ENCODE measurements at regions of chr1 and their contacts with region 1.

Region 1: DNA sequence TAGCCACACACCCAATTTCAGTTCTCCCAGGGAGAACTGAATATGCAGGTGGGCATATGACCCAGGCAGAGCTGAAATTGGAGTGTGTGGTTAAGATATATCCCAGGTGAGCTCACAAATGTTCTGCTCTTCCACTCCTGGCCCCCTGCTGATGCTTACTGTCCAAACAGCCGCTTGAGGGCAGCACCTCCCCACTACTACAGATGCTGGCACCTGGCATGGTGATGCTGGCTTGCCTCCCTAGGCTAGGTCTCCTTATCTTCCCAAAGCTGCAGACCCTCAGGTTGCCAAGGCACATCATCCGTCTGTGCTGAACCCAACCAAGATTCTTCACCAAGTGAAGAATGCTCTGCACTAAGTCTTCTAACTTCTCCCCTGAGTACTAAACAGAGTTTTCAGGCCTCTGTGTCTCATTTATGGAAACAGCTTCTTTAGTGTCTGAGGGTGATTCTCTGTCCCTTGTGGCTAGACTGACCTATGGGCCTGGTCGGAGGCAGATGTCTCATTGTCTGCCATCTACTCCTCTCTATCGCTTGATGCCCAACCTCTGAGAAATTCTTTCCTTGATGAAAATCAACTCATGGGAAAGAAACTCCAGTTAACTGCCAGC is 27.2 kb downstream of the XCL1 start:
- DNase-seq: peak; percentile 68 to 79
- ATAC-seq: peak; percentile 53 to 69
- H3K4me3 ChIP-seq: no peak overlapping the region
- H3K27ac ChIP-seq: peak overlapping the region; percentile 17 to 100 (median 56)
- H3K4me1 ChIP-seq: peaks cover 28 to 32% of the 10 kb centered on the region in 2 donors
- H3K27me3 ChIP-seq: no peaks in the 10 kb centered on the region
- CTCF ChIP-seq: peak; percentile 86 to 93 (median 87)
- POLR2A ChIP-seq: no peak

Region 2: GRCh38 chr1:168466092-168466713 is 137.4 kb before region 1 on chr1:
- in situ Hi-C with region 1: no loop called
- intact Hi-C with region 1: no loop called
- DNase-seq: peak in 1 of 2 donors; percentile 33
- ATAC-seq: no peak
- H3K4me3 ChIP-seq: no peak overlapping the region
- H3K27ac ChIP-seq: peak overlapping the region in 1 of 4 donors; percentile 12
- H3K4me1 ChIP-seq: peaks cover 23 to 35% of the 10 kb centered on the region in 2 donors
- H3K27me3 ChIP-seq: no peaks in the 10 kb centered on the region
- CTCF ChIP-seq: no peak
- POLR2A ChIP-seq: no peak

Region 3: GRCh38 chr1:168488138-168488537 is 115.5 kb before region 1 on chr1:
- in situ Hi-C with region 1: no loop called
- intact Hi-C with region 1: no loop called
- DNase-seq: peak; percentile 32 to 67
- ATAC-seq: peak; percentile 89 to 90
- H3K4me3 ChIP-seq: no peak overlapping the region
- H3K27ac ChIP-seq: no peak overlapping the region
- H3K4me1 ChIP-seq: peaks cover 0 to 6% of the 10 kb centered on the region in 2 donors
- H3K27me3 ChIP-seq: no peaks in the 10 kb centered on the region
- CTCF ChIP-seq: no peak
- POLR2A ChIP-seq: no peak

Region 4: GRCh38 chr1:168567007-168567406 is 36.6 kb before region 1 on chr1:
- in situ Hi-C with region 1: no loop called
- intact Hi-C with region 1: no loop called
- DNase-seq: no peak
- ATAC-seq: no peak
- H3K4me3 ChIP-seq: no peak overlapping the region
- H3K27ac ChIP-seq: no peak overlapping the region
- H3K4me1 ChIP-seq: no peaks in the 10 kb centered on the region
- H3K27me3 ChIP-seq: no peaks in the 10 kb centered on the region
- CTCF ChIP-seq: no peak
- POLR2A ChIP-seq: no peak

Region 5: DNA sequence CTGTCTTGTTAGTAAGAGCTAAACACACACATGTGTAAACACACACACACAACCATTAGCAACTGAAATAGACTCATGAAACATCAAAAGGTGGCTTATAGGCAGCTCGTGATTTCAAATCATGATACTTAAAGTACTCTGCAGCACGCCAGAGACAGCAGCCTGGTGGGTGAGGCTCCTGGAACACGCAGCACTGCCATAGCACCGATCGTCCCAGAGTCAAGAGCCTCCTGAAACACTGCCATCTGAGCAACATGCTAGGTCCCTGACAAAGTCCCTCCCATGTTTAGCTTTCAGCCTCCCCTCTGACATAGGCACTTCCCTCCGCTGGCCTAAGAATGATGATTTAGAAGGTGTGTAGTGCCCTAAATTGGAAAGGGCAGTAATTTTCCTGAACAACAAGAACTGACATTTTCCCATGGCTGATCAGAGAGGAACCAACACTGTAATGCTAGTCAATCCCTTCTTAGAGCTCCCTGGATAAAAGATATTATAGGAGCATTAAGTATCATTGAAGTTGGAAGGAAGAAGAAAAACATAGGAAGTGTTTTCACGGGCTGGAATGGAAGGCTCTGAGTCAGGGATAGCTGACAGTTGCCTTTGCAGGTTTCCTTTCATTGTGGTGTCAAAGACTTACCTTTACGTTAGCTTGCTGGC is 139.5 kb after region 1 on chr1:
- in situ Hi-C with region 1: no loop called
- intact Hi-C with region 1: no loop called
- DNase-seq: no peak
- ATAC-seq: no peak
- H3K4me3 ChIP-seq: no peak overlapping the region
- H3K27ac ChIP-seq: no peak overlapping the region
- H3K4me1 ChIP-seq: no peaks in the 10 kb centered on the region
- H3K27me3 ChIP-seq: no peaks in the 10 kb centered on the region
- CTCF ChIP-seq: no peak
- POLR2A ChIP-seq: no peak

Region 6: DNA sequence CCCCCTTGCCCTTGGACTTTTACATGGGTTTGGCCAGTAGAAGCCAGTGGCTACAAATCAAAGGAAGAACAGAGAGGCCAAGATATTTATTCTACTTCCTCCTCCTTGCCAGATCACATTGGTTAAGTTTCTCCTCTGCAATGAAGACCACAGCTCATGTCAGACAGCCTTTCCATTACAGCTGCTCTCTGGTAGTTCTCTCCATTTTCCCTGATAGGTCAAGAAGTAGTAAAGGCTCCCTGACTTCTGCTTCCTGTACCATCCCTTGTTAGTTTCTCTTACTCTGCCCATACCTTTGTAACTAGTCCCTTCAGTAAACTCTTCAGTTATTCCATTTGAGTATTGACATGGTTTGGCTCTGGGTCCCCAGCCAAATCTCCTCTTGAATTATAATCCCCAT is 736.2 kb after region 1 on chr1:
- in situ Hi-C with region 1: loop called in 3 of 4 experiments (anchors 5 to 10 kb)
- intact Hi-C with region 1: no loop called
- DNase-seq: no peak
- ATAC-seq: no peak
- H3K4me3 ChIP-seq: no peak overlapping the region
- H3K27ac ChIP-seq: no peak overlapping the region
- H3K4me1 ChIP-seq: no peaks in the 10 kb centered on the region
- H3K27me3 ChIP-seq: no peaks in the 10 kb centered on the region
- CTCF ChIP-seq: no peak
- POLR2A ChIP-seq: no peak

Region 7: DNA sequence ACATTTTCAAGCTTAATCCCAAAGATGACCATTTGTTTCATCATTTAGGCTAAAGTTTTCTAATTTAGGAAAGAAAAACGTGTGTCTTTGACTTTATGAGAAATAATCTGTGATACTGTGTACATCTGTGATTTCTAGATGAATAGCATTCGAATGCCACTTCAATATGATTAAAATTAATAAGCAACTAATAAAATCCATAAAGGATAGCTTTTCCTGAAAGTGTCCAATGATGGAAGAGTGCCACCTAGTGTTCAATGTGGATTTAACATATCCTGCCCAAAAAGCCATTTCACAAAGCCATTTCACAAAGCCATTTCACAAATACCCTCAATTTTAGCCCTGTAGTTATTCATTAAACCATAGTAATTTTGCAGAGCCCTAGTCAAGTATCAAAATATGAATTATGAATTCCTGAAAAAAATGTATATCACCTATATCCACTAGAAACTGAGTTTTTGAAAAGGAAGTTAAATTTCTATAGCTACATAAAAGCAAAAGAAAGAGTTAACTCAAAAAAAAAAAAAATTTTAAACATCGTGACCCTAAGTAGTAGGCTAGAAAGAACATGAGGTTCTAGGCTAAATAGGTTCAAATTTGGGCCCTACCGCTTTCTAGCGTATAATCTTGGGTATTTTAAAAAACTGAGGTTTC is 744.9 kb after region 1 on chr1:
- in situ Hi-C with region 1: loop called (anchors 5 to 10 kb)
- intact Hi-C with region 1: loop called (anchors 1 kb)
- DNase-seq: no peak
- ATAC-seq: peak in 1 of 2 donors; percentile 54
- H3K4me3 ChIP-seq: no peak overlapping the region
- H3K27ac ChIP-seq: no peak overlapping the region
- H3K4me1 ChIP-seq: no peaks in the 10 kb centered on the region
- H3K27me3 ChIP-seq: no peaks in the 10 kb centered on the region
- CTCF ChIP-seq: peak; percentile 65 to 85 (median 82)
- POLR2A ChIP-seq: no peak